ENCODE measurements at regions of chr15 and their contacts with region 1.

Region 1: DNA sequence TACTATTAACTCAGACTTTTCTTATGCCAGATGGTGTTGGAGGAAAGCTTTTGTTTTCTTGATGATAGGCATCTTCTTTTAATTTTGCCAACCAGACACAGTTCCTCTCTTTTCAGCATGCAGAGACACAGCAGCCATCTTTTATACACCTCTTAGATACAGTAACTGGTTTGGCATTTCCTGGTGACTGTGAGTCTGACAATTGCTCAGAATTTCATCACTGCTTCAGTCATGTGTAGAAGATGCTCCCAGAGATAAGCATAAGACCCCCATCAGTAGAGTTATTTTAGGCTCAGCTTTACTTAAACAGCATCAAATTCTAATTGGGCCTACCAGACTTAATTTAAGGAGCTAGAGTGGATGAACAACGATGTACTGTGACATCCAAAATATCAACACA is 779.0 kb downstream of the SQOR start:
- DNase-seq: no peak
- ATAC-seq: no peak
- H3K4me3 ChIP-seq: no peak overlapping the region
- H3K27ac ChIP-seq: no peak overlapping the region
- H3K4me1 ChIP-seq: peaks cover 0 to 14% (median 0%) of the 10 kb centered on the region in 9 donors
- H3K27me3 ChIP-seq: no peaks in the 10 kb centered on the region
- CTCF ChIP-seq: no peak

Region 2: GRCh38 chr15:46461416-46461815 is 47.6 kb after region 1 on chr15:
- intact Hi-C with region 1: loop called in 1 of 10 experiments (anchors 5 kb)
- DNase-seq: no peak
- ATAC-seq: no peak
- H3K4me3 ChIP-seq: no peak overlapping the region
- H3K27ac ChIP-seq: no peak overlapping the region
- H3K4me1 ChIP-seq: no peaks in the 10 kb centered on the region
- H3K27me3 ChIP-seq: no peaks in the 10 kb centered on the region
- CTCF ChIP-seq: no peak